AG04450 (cell line): ENCODE measurements at regions of chr3 and their contacts with region 1.

Region 1: GRCh38 chr3:30693470-30694120 is 87.2 kb downstream of the TGFBR2 start:
- DNase-seq: peak; percentile 48
- H3K4me3 ChIP-seq: no peak overlapping the region
- H3K27ac ChIP-seq: no peak overlapping the region
- H3K27me3 ChIP-seq: no peaks in the 10 kb centered on the region
- CTCF ChIP-seq: peak; percentile 88

Region 2: DNA sequence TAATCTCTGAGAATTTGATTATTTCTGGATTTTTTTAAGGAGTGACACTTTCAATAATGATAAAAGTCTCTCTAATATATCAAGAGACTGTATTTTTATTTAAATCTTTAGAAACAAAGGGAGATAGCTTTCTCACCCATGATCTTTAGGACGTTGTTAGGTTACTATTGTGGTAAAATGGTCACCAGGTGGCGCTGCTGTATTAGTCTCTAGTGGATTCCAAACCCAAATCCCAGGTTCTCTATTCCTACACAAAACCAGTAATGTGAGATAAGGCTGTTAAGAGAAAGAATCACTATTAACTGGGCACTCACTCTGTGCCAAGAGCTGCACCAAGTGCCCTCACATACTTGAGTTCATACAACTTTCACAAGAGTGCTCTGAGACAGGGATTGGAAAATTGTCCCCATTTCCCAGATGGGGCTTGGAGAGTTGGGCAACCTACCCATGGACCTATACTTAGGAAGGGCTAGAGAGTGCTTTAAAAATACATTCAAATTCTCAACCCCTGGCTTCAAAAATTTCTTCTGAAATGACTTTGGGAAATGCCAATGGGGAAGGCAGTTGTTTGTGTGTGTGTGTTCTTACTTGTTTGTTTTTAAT is 680.6 kb before region 1 on chr3:
- CTCF ChIA-PET with region 1: interaction called, 10 read pairs
- POLR2A ChIA-PET with region 1: no interaction called
- DNase-seq: peak; percentile 24
- H3K4me3 ChIP-seq: no peak overlapping the region
- H3K27ac ChIP-seq: no peak overlapping the region
- H3K27me3 ChIP-seq: no peaks in the 10 kb centered on the region
- CTCF ChIP-seq: peak; percentile 72

Region 3: GRCh38 chr3:30042274-30042859 is 651.2 kb before region 1 on chr3:
- CTCF ChIA-PET with region 1: interaction called, 100 read pairs
- POLR2A ChIA-PET with region 1: no interaction called
- DNase-seq: peak; percentile 49
- H3K4me3 ChIP-seq: no peak overlapping the region
- H3K27ac ChIP-seq: no peak overlapping the region
- H3K27me3 ChIP-seq: no peaks in the 10 kb centered on the region
- CTCF ChIP-seq: peak; percentile 82

Region 4: GRCh38 chr3:30162579-30162978 is 531.0 kb before region 1 on chr3:
- CTCF ChIA-PET with region 1: interaction called, 10 read pairs
- POLR2A ChIA-PET with region 1: no interaction called
- DNase-seq: peak; percentile 54
- H3K4me3 ChIP-seq: no peak overlapping the region
- H3K27ac ChIP-seq: no peak overlapping the region
- H3K27me3 ChIP-seq: no peaks in the 10 kb centered on the region
- CTCF ChIP-seq: no peak

Region 5: GRCh38 chr3:30681643-30682211 is 11.9 kb before region 1 on chr3:
- CTCF ChIA-PET with region 1: interaction called, 14 read pairs
- POLR2A ChIA-PET with region 1: no interaction called
- DNase-seq: no peak
- H3K4me3 ChIP-seq: no peak overlapping the region
- H3K27ac ChIP-seq: peak overlapping the region; percentile 72
- H3K27me3 ChIP-seq: no peaks in the 10 kb centered on the region
- CTCF ChIP-seq: no peak

Region 6: DNA sequence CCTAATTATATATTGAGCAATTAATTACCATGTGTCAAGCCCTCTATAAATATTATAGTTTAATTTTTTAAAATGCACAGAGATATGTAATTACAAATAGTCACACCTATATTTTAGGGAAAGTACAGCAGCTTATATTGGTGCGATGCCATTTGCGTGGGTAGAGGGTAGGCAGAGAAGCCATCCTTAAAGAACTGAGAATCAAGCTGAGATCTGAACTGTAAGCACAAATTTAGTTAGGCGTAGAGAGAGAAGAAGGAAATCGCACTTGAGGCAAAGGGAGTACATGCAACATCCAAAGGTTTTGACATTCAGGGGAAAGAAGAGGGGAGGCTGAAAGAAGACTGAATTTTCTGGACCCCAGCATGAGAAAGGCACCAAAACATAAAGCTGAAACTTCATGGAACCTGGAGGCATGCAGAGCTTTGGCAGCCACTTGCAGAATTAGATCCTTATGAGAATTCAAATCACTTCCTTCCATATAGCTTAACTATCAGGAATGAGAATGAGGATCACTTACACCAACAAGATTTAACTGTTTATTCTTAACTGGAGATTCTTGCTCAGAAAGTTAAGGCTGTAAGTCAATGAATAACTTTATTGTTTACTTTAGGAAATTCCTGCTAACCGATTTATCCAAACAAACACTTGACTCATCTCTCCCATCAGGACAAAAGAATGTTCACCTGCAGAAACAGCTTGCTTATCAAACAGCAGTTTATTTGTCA is 27.2 kb after region 1 on chr3:
- CTCF ChIA-PET with region 1: interaction called, 18 read pairs
- POLR2A ChIA-PET with region 1: no interaction called
- DNase-seq: peak; percentile 89
- H3K4me3 ChIP-seq: no peak overlapping the region
- H3K27ac ChIP-seq: peak overlapping the region; percentile 40
- H3K27me3 ChIP-seq: no peaks in the 10 kb centered on the region
- CTCF ChIP-seq: no peak

Region 7: GRCh38 chr3:31004025-31004678 is 310.6 kb after region 1 on chr3:
- CTCF ChIA-PET with region 1: no interaction called
- POLR2A ChIA-PET with region 1: no interaction called
- DNase-seq: peak; percentile 72
- H3K4me3 ChIP-seq: no peak overlapping the region
- H3K27ac ChIP-seq: peak overlapping the region; percentile 49
- H3K27me3 ChIP-seq: no peaks in the 10 kb centered on the region
- CTCF ChIP-seq: no peak